Panc1 (cell line): ENCODE measurements at regions of chr16 and their contacts with region 1.

Region 1: GRCh38 chr16:23781177-23781576 is 26.4 kb downstream of the CHP2 start:
- DNase-seq: no peak
- ATAC-seq: no peak
- H3K4me3 ChIP-seq: no peak overlapping the region
- H3K27ac ChIP-seq: no peak overlapping the region
- H3K4me1 ChIP-seq: 0 out of 2 replicates have a peak, but pooled peaks cover 2% of the 10 kb centered on the region
- H3K27me3 ChIP-seq: no peaks in the 10 kb centered on the region
- CTCF ChIP-seq: no peak

Region 2: GRCh38 chr16:23807028-23807427 is 25.9 kb after region 1 on chr16:
- CTCF ChIA-PET with region 1: no interaction called
- POLR2A ChIA-PET with region 1: no interaction called
- in situ Hi-C with region 1: no loop called
- intact Hi-C with region 1: no loop called
- DNase-seq: no peak
- ATAC-seq: no peak
- H3K4me3 ChIP-seq: no peak overlapping the region
- H3K27ac ChIP-seq: no peak overlapping the region
- H3K4me1 ChIP-seq: no peaks in the 10 kb centered on the region
- H3K27me3 ChIP-seq: peaks cover 14% of the 10 kb centered on the region; the same call in 1 of the 2 replicates
- CTCF ChIP-seq: no peak

Region 3: GRCh38 chr16:24348901-24349662 is 567.9 kb after region 1 on chr16:
- CTCF ChIA-PET with region 1: no interaction called
- POLR2A ChIA-PET with region 1: interaction called, 13 read pairs
- in situ Hi-C with region 1: no loop called
- intact Hi-C with region 1: no loop called
- DNase-seq: no peak
- ATAC-seq: no peak
- H3K4me3 ChIP-seq: no peak overlapping the region
- H3K27ac ChIP-seq: no peak overlapping the region
- H3K4me1 ChIP-seq: no peaks in the 10 kb centered on the region
- H3K27me3 ChIP-seq: peaks cover 2% of the 10 kb centered on the region; the same call in 1 of the 2 replicates
- CTCF ChIP-seq: no peak